IMR-90 (cell line): ENCODE measurements at regions of chr10 and their contacts with region 1.

Region 1: DNA sequence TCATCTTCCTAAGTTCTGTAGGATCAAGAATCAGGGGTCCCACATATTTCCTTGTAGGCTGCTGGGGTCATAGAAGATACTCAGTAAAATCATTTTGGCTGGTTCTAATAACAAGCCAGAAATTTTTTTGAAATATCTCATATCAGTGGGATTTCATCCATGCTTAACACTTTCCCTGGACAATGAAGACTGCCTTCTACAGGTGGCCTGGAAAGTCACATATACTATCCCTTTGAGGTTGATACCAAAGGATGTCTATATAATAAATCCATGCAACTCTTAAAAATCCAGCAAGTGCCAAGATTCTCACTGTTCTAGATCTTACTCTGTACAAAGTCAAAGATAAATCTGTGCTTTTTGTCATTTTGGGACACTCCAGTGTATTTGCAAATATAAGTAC is 225.8 kb upstream of the NEBL start:
- DNase-seq: no peak
- ATAC-seq: no peak
- H3K4me3 ChIP-seq: no peak overlapping the region
- H3K27ac ChIP-seq: no peak overlapping the region
- H3K4me1 ChIP-seq: no peaks in the 10 kb centered on the region
- H3K27me3 ChIP-seq: no peaks in the 10 kb centered on the region
- CTCF ChIP-seq: no peak
- POLR2A ChIP-seq: no peak
- RAD21 ChIP-seq: no peak

Region 2: GRCh38 chr10:21157664-21158063 is 34.8 kb after region 1 on chr10:
- CTCF ChIA-PET with region 1: no interaction called
- POLR2A ChIA-PET with region 1: no interaction called
- dilution Hi-C with region 1: no loop called
- in situ Hi-C with region 1: no loop called
- intact Hi-C with region 1: loop called (anchors 1 kb)
- DNase-seq: no peak
- ATAC-seq: no peak
- H3K4me3 ChIP-seq: no peak overlapping the region
- H3K27ac ChIP-seq: no peak overlapping the region
- H3K4me1 ChIP-seq: no peaks in the 10 kb centered on the region
- H3K27me3 ChIP-seq: no peaks in the 10 kb centered on the region
- CTCF ChIP-seq: no peak
- POLR2A ChIP-seq: no peak
- RAD21 ChIP-seq: no peak